ENCODE measurements at regions of chr14 and their contacts with region 1.

Region 1: GRCh38 chr14:99628832-99629618 is 15.9 kb upstream of the HHIPL1 start:
- DNase-seq: peak; percentile 37
- ATAC-seq: peak; percentile 83
- H3K4me3 Mint-ChIP-seq: no peak overlapping the region
- H3K27ac Mint-ChIP-seq: no peak overlapping the region
- H3K4me1 Mint-ChIP-seq: peaks cover 7% of the 10 kb centered on the region
- H3K27me3 Mint-ChIP-seq: peaks cover 26% of the 10 kb centered on the region
- CTCF ChIP-seq: no peak

Region 2: GRCh38 chr14:99460793-99461192 is 168.2 kb before region 1 on chr14:
- CTCF ChIA-PET with region 1: no interaction called
- POLR2A ChIA-PET with region 1: no interaction called
- intact Hi-C with region 1: no loop called
- DNase-seq: no peak
- ATAC-seq: no peak
- H3K4me3 Mint-ChIP-seq: no peak overlapping the region
- H3K27ac Mint-ChIP-seq: no peak overlapping the region
- H3K4me1 Mint-ChIP-seq: peaks cover 7% of the 10 kb centered on the region
- H3K27me3 Mint-ChIP-seq: no peaks in the 10 kb centered on the region
- CTCF ChIP-seq: no peak

Region 3: GRCh38 chr14:99518441-99519346 is 110.3 kb before region 1 on chr14:
- CTCF ChIA-PET with region 1: no interaction called
- POLR2A ChIA-PET with region 1: no interaction called
- intact Hi-C with region 1: loop called (anchors 1 kb)
- DNase-seq: peak; percentile 73
- ATAC-seq: peak; percentile 86
- H3K4me3 Mint-ChIP-seq: no peak overlapping the region
- H3K27ac Mint-ChIP-seq: no peak overlapping the region
- H3K4me1 Mint-ChIP-seq: no peaks in the 10 kb centered on the region
- H3K27me3 Mint-ChIP-seq: no peaks in the 10 kb centered on the region
- CTCF ChIP-seq: no peak

Region 4: GRCh38 chr14:99563233-99564129 is 65.5 kb before region 1 on chr14:
- CTCF ChIA-PET with region 1: no interaction called
- POLR2A ChIA-PET with region 1: no interaction called
- intact Hi-C with region 1: loop called (anchors 10 kb)
- DNase-seq: no peak
- ATAC-seq: no peak
- H3K4me3 Mint-ChIP-seq: no peak overlapping the region
- H3K27ac Mint-ChIP-seq: no peak overlapping the region
- H3K4me1 Mint-ChIP-seq: no peaks in the 10 kb centered on the region
- H3K27me3 Mint-ChIP-seq: peaks cover 1% of the 10 kb centered on the region
- CTCF ChIP-seq: no peak

Region 5: DNA sequence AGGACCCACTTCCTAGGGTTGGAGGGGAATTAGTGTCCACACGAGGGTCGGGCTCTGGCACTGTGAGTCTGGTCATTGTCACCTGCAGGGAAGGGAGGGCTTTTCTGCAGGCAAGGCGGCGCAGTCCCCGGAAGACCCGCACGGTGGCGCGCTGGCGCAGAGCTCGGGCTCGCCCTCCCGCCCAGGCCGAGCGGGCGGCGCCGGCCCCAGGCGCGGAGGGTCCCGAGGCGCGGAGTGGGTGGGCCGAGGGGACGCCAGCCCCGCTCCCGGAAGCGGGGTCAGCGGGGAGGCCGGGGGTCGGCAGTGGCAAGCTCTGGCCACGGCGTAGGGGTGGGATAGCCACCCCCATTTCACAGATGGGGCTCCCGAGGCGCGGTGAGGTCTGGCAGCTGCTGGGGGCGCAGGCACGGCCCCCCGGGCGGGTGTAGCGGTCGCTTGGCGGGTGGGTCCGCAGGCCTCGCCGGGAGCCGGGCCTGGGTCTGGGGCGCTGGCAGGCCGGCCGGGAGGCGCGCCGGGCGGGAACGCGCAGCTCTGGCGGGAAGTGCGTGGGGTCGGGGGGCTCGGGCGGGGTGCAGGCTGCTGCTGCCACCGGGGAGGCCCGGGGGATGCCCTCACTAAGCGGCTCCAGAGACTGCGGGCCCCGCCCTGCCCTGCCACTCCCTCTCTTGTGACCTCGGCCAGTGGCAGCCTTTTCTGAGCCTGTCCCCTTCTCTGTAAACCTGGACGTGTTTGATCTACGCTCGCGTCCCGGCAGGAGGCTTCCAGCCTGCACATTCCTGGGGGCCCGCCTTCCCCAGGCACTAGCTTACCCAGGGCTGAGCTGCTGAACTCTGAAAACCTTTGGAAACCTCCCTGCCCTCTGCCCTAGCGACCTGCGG is 101.2 kb after region 1 on chr14:
- CTCF ChIA-PET with region 1: no interaction called
- POLR2A ChIA-PET with region 1: no interaction called
- intact Hi-C with region 1: no loop called
- DNase-seq: peak; percentile 49
- ATAC-seq: peak; percentile 70
- H3K4me3 Mint-ChIP-seq: peak overlapping the region; percentile 32
- H3K27ac Mint-ChIP-seq: no peak overlapping the region
- H3K4me1 Mint-ChIP-seq: peaks cover 2% of the 10 kb centered on the region
- H3K27me3 Mint-ChIP-seq: peaks cover 45% of the 10 kb centered on the region
- CTCF ChIP-seq: no peak

Measured in activated B cell treated with CpG ODN at 0.5 μM for 24 hours (primary cell).